CD4-positive, alpha-beta memory T cell (primary cell): ENCODE measurements at regions of chr6 and their contacts with region 1.

Region 1: DNA sequence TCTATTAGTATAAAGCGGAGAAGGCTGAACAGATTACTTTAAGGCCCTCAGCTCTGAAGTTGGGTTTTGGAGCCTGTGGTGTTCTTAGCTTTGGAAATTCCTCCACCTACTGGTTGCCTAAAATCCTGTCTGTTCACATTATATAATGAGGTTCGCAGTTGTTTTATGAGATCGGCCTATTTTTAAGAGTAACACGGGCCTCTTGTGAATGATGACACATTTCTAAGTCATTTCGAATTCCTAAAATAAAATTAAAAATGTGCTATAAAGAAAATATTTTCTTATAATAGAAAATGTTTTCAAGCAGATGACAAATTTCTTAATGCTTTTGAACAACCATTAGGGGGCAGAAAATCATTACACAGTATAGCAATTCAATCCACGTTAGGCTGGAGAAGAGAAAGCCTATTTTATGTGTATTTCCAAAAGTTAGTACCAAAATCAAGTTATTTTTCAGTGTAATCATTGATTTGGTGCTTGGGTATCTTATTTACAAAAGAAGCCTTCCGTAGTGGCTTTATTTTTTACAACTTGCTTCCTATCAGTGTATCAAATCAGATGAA is 15.8 kb upstream of the FAM8A1 start:
- DNase-seq: peak in 4 of 5 donors; percentile 45 to 52 (median 47)
- H3K4me3 ChIP-seq: no peak overlapping the region
- H3K4me3 Mint-ChIP-seq: peak overlapping the region in 2 of 8 donors; percentile 1 to 3
- H3K27ac ChIP-seq: no peak overlapping the region
- H3K27ac Mint-ChIP-seq: peak overlapping the region in 3 of 7 donors; percentile 0 to 58 (median 2)
- H3K4me1 ChIP-seq: peaks cover 2% of the 10 kb centered on the region
- H3K4me1 Mint-ChIP-seq: peaks cover 2 to 4% (median 3%) of the 10 kb centered on the region in 4 donors
- H3K27me3 ChIP-seq: no peaks in the 10 kb centered on the region
- H3K27me3 Mint-ChIP-seq: peaks cover 5 to 10% of the 10 kb centered on the region in 2 donors

Region 2: GRCh38 chr6:17156112-17156921 is 428.0 kb before region 1 on chr6:
- CTCF ChIA-PET with region 1: no interaction called
- POLR2A ChIA-PET with region 1: no interaction called
- intact Hi-C with region 1: loop called (anchors 1 kb)
- DNase-seq: peak; percentile 46 to 57 (median 49)
- H3K4me3 ChIP-seq: no peak overlapping the region
- H3K4me3 Mint-ChIP-seq: no peak overlapping the region
- H3K27ac ChIP-seq: no peak overlapping the region
- H3K27ac Mint-ChIP-seq: no peak overlapping the region
- H3K4me1 ChIP-seq: no peaks in the 10 kb centered on the region
- H3K4me1 Mint-ChIP-seq: no peaks in the 10 kb centered on the region
- H3K27me3 ChIP-seq: no peaks in the 10 kb centered on the region
- H3K27me3 Mint-ChIP-seq: peaks cover 13 to 20% of the 10 kb centered on the region in 2 donors

Region 3: GRCh38 chr6:17700421-17701416 is 116.4 kb after region 1 on chr6:
- CTCF ChIA-PET with region 1: interaction called, 16 read pairs
- POLR2A ChIA-PET with region 1: interaction called, 3 read pairs
- intact Hi-C with region 1: loop called (anchors 5 kb)
- DNase-seq: no peak
- H3K4me3 ChIP-seq: no peak overlapping the region
- H3K4me3 Mint-ChIP-seq: peak overlapping the region in 4 of 8 donors; percentile 13 to 43 (median 23)
- H3K27ac ChIP-seq: peak overlapping the region; percentile 14
- H3K27ac Mint-ChIP-seq: peak overlapping the region in 6 of 7 donors; percentile 53 to 93 (median 78)
- H3K4me1 ChIP-seq: peaks cover 60% of the 10 kb centered on the region
- H3K4me1 Mint-ChIP-seq: peaks cover 30 to 77% (median 54%) of the 10 kb centered on the region in 4 donors
- H3K27me3 ChIP-seq: no peaks in the 10 kb centered on the region
- H3K27me3 Mint-ChIP-seq: no peaks in the 10 kb centered on the region

Region 4: DNA sequence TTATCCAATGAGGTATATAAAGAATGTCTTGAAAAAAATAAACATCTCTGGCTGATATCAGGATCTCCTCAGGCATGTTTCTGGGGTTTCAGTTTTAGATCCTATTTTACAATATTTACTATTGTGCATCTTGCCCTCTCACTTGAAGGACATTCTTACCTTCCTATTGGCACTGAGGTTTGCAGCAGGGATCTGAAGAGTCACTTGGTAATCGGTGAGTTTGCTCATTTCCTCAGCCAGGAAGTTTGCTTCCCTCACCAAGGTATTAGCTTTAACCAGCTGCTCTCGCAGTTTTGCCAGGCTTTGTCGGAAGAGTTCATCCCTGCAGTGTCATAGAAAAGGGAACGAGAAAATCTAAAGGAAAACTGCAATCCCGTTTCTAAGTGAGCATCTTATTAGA is 224.3 kb after region 1 on chr6:
- CTCF ChIA-PET with region 1: interaction called, 72 read pairs
- POLR2A ChIA-PET with region 1: no interaction called
- intact Hi-C with region 1: loop called (anchors 1 kb)
- DNase-seq: no peak
- H3K4me3 ChIP-seq: no peak overlapping the region
- H3K4me3 Mint-ChIP-seq: peak overlapping the region in 1 of 8 donors; percentile 11
- H3K27ac ChIP-seq: no peak overlapping the region
- H3K27ac Mint-ChIP-seq: no peak overlapping the region
- H3K4me1 ChIP-seq: no peaks in the 10 kb centered on the region
- H3K4me1 Mint-ChIP-seq: peaks cover 0 to 3% (median 0%) of the 10 kb centered on the region in 4 donors
- H3K27me3 ChIP-seq: no peaks in the 10 kb centered on the region
- H3K27me3 Mint-ChIP-seq: peaks cover 11 to 20% of the 10 kb centered on the region in 2 donors

Region 5: GRCh38 chr6:17820055-17820454 is 235.7 kb after region 1 on chr6:
- CTCF ChIA-PET with region 1: interaction called, 20 read pairs
- POLR2A ChIA-PET with region 1: no interaction called
- intact Hi-C with region 1: loop called (anchors 1 kb)
- DNase-seq: no peak
- H3K4me3 ChIP-seq: no peak overlapping the region
- H3K4me3 Mint-ChIP-seq: no peak overlapping the region
- H3K27ac ChIP-seq: no peak overlapping the region
- H3K27ac Mint-ChIP-seq: no peak overlapping the region
- H3K4me1 ChIP-seq: no peaks in the 10 kb centered on the region
- H3K4me1 Mint-ChIP-seq: no peaks in the 10 kb centered on the region
- H3K27me3 ChIP-seq: no peaks in the 10 kb centered on the region
- H3K27me3 Mint-ChIP-seq: peaks cover 4 to 6% of the 10 kb centered on the region in 2 donors